Tibial artery (tissue), 4 donors: ENCODE measurements at regions of chr9 and their contacts with region 1.

Region 1: GRCh38 chr9:15211160-15211814 is 95.7 kb downstream of the TTC39B start:
- DNase-seq: peak; percentile 57 to 76
- H3K4me3 ChIP-seq: no peak overlapping the region
- H3K27ac ChIP-seq: peak overlapping the region; percentile 62 to 65
- H3K4me1 ChIP-seq: peaks cover 0 to 38% (median 13%) of the 10 kb centered on the region in 4 donors
- H3K27me3 ChIP-seq: no peaks in the 10 kb centered on the region
- CTCF ChIP-seq: peak; percentile 89 to 92

Region 2: DNA sequence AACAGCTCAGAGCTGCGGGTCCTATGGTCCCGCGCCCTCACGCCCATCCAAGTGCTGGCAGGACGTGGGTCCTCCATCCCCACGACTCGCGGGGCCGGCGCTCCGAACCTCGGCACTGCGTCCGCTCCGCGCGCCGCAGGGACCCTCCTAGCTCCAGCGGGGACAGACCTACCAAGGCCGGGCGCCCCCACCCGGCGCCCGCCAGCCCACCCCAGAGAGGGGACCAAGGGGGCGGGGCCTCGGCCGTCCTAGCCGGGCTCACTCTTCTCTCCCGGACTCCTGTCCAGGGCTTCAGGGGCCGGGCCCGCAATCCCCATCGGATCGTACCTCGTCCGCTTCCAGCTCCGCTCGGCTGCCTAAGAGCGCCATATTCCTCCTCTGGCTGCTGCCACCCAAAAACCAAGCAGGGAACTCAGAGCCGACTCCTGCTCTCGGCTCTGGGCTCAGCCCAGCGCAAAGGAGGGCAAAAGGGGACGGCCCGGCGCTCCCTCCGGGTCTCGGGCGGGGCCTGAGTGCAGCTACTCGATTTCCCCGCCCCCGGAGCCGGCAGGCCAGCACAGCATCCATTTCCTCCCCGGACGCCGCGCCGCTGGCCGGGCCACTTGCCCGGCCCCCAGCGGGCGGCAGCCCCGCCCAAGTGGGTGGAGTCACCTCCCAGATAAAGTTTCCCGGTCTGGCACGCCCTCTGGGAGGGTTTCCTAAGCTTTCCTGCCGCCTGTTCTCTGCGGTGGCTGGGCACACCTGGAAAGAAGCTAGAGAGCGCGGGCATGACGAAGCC is 95.7 kb after region 1 on chr9 and contains the start of gene TTC39B:
- intact Hi-C with region 1: loop called (anchors 5 kb)
- DNase-seq: peak; percentile 94 to 97
- H3K4me3 ChIP-seq: peak within 1 kb of the TSS; percentile 90 to 92
- H3K27ac ChIP-seq: peak within 1 kb of the TSS; percentile 94 to 95
- H3K4me1 ChIP-seq: peaks cover 0 to 24% (median 6%) of the 10 kb centered on the region in 4 donors
- H3K27me3 ChIP-seq: no peaks in the 10 kb centered on the region
- CTCF ChIP-seq: no peak

Region 3: GRCh38 chr9:15416880-15417279 is 205.6 kb after region 1 on chr9:
- intact Hi-C with region 1: loop called (anchors 5 kb)
- DNase-seq: no peak
- H3K4me3 ChIP-seq: no peak overlapping the region
- H3K27ac ChIP-seq: no peak overlapping the region
- H3K4me1 ChIP-seq: peaks cover 0 to 3% (median 0%) of the 10 kb centered on the region in 4 donors
- H3K27me3 ChIP-seq: no peaks in the 10 kb centered on the region
- CTCF ChIP-seq: peak; percentile 36 to 38